PC-9 (cell line): ENCODE measurements at regions of chr1 and their contacts with region 1.

Region 1: GRCh38 chr1:156198831-156199349 is 5.0 kb downstream of the SLC25A44 start:
- DNase-seq: no peak
- H3K4me3 ChIP-seq: no peak overlapping the region
- H3K27ac ChIP-seq: no peak overlapping the region
- H3K4me1 ChIP-seq: peaks cover 7% of the 10 kb centered on the region
- H3K27me3 ChIP-seq: no peaks in the 10 kb centered on the region
- CTCF ChIP-seq: no peak

Region 2: GRCh38 chr1:155884031-155884960 is 314.6 kb before region 1 on chr1:
- CTCF ChIA-PET with region 1: no interaction called
- POLR2A ChIA-PET with region 1: no interaction called
- intact Hi-C with region 1: no loop called
- DNase-seq: no peak
- H3K4me3 ChIP-seq: no peak overlapping the region
- H3K27ac ChIP-seq: no peak overlapping the region
- H3K4me1 ChIP-seq: no peaks in the 10 kb centered on the region
- H3K27me3 ChIP-seq: no peaks in the 10 kb centered on the region
- CTCF ChIP-seq: no peak

Region 3: DNA sequence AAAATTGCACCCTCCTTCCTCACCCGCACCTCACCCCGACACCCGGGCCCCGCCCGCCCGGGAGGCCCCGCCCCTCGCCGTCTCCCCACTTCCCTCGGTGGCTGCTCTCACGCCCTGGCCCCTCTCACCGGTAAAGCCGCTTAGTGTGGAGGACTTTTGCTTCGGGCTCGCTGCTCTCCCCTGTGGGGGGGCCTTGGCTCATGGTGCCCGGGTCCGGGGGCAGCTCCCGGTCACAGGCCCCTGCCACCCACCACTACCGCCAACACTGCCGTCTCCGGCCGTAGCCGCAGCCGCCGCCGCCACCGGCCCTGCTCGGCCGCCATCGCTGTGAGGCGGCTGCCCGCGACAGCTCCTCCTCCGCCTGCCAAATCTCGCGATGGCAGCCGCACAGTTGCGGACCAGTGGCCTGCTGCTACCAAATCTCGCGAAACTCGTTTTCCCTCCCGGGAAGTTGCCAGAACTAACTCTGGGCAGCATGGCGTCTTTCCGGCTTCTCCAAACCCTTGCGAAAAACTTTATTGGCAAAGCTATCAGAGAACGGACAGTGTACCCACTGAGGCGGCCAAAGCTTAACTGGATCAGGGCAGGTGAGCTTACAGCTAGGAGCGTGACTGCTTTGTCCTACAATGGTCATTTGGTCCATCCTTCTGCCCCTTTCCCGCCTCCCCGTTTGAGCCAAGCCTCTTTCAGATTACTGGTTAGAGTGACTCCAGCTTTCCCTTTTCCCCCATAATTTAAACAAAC is 83.8 kb after region 1 on chr1 and contains the start of gene SMG5:
- CTCF ChIA-PET with region 1: no interaction called
- POLR2A ChIA-PET with region 1: interaction called, 25 read pairs
- intact Hi-C with region 1: no loop called
- DNase-seq: peak; percentile 93 to 95
- H3K4me3 ChIP-seq: peak within 1 kb of the TSS; percentile 97
- H3K27ac ChIP-seq: peak within 1 kb of the TSS; percentile 85
- H3K4me1 ChIP-seq: peaks cover 30% of the 10 kb centered on the region
- H3K27me3 ChIP-seq: no peaks in the 10 kb centered on the region
- CTCF ChIP-seq: no peak
- total RNA-seq, gene SMG5: 63.3 and 66.2 TPM in 2 replicates